PC-9 (cell line): ENCODE measurements at regions of chr11 and their contacts with region 1.

Region 1: GRCh38 chr11:127994736-127995135 is 592.6 kb downstream of the ETS1 start:
- DNase-seq: no peak
- H3K4me3 ChIP-seq: no peak overlapping the region
- H3K27ac ChIP-seq: no peak overlapping the region
- H3K4me1 ChIP-seq: no peaks in the 10 kb centered on the region
- H3K27me3 ChIP-seq: peaks cover 50% of the 10 kb centered on the region
- CTCF ChIP-seq: no peak

Region 2: GRCh38 chr11:126816645-126817044 is 1178.1 kb before region 1 on chr11:
- CTCF ChIA-PET with region 1: interaction called, 12 read pairs
- POLR2A ChIA-PET with region 1: no interaction called
- intact Hi-C with region 1: no loop called
- DNase-seq: no peak
- H3K4me3 ChIP-seq: no peak overlapping the region
- H3K27ac ChIP-seq: no peak overlapping the region
- H3K4me1 ChIP-seq: no peaks in the 10 kb centered on the region
- H3K27me3 ChIP-seq: peaks cover 41% of the 10 kb centered on the region
- CTCF ChIP-seq: no peak